ENCODE measurements at regions of chr17 and their contacts with region 1.

Region 1: GRCh38 chr17:49230636-49231562 is at the start of gene PHOSPHO1:
- DNase-seq: peak; percentile 93
- H3K4me3 Mint-ChIP-seq: peak within 1 kb of the TSS; percentile 70
- H3K27ac Mint-ChIP-seq: no peak within 1 kb of the TSS
- H3K4me1 Mint-ChIP-seq: peaks cover 16% of the 10 kb centered on the region
- H3K27me3 Mint-ChIP-seq: peaks cover 73% of the 10 kb centered on the region

Region 2: DNA sequence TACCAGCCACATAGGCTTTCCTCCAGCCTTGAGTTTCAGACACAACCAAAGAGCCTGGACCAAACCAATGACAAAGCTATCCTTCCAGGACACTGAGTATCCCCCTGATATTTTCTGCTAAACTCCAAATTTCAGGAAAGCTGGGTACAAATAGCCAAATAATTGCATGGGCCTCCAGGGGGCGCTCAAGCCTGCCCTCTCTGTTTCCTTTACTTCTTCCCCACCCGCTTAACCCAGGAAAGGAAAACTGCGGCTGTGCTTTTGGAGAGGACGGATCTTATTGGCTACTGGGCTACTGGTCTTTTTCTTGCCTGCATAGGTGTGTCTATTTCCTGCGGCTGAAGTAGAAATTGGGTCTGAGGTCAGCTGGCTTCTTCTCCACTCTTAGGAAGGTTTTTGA is 50.6 kb before region 1 on chr17:
- CTCF ChIA-PET with region 1: interaction called, 96 read pairs
- DNase-seq: peak; percentile 75
- H3K4me3 Mint-ChIP-seq: no peak overlapping the region
- H3K27ac Mint-ChIP-seq: no peak overlapping the region
- H3K4me1 Mint-ChIP-seq: peaks cover 9% of the 10 kb centered on the region
- H3K27me3 Mint-ChIP-seq: peaks cover 36% of the 10 kb centered on the region

Region 3: GRCh38 chr17:49191917-49192741 is 38.8 kb before region 1 on chr17:
- CTCF ChIA-PET with region 1: interaction called, 21 read pairs
- DNase-seq: peak; percentile 92
- H3K4me3 Mint-ChIP-seq: peak overlapping the region; percentile 84
- H3K27ac Mint-ChIP-seq: peak overlapping the region; percentile 100
- H3K4me1 Mint-ChIP-seq: peaks cover 54% of the 10 kb centered on the region
- H3K27me3 Mint-ChIP-seq: peaks cover 18% of the 10 kb centered on the region

Region 4: GRCh38 chr17:49197346-49197998 is 33.4 kb before region 1 on chr17:
- CTCF ChIA-PET with region 1: interaction called, 21 read pairs
- DNase-seq: no peak
- H3K4me3 Mint-ChIP-seq: no peak overlapping the region
- H3K27ac Mint-ChIP-seq: no peak overlapping the region
- H3K4me1 Mint-ChIP-seq: peaks cover 34% of the 10 kb centered on the region
- H3K27me3 Mint-ChIP-seq: peaks cover 12% of the 10 kb centered on the region

Region 5: DNA sequence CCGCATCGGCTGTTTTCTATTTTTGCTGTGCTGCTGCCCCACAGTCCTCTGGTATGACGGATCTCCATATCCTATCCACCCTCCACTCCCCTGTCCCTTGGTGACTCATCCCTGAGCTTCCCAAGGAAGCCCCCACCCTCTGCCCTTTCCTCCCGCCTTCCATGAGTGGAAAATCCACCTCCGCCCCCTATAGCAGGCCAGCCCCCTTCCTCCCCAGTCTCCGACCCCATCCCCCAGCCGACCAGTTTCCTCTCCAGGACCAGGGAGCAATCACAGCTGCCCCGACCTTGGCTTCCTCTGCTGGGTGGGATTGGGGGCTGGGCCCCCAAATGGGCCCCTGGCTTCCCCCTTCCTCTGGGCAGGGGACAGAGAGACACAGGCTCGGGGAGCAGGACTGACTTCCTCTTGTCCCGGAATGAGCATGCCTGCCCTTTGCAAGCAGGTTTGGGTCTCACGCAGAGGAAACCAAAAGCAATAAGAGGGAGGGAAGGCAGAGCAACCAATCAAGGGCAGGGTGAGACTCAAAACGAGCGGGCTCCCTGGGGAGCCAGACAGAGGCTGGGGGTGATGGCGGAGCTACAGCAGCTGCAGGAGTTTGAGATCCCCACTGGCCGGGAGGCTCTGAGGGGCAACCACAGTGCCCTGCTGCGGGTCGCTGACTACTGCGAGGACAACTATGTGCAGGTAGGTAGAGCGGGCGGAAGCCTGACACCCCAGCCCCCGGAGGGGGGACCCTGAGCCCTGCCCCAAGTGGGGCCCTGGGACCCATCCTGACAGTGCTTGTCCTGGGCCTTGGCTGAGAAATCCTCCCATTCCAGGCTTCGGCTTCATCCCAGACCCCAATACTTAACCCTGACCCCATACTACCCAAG is 20.5 kb before region 1 on chr17 and contains the starts of genes ABI3 and GNGT2:
- CTCF ChIA-PET with region 1: interaction called, 15 read pairs
- DNase-seq: peak; percentile 80
- H3K4me3 Mint-ChIP-seq: peak within 1 kb of the TSS; percentile 93
- H3K27ac Mint-ChIP-seq: peak within 1 kb of the TSS; percentile 86
- H3K4me1 Mint-ChIP-seq: peaks cover 67% of the 10 kb centered on the region
- H3K27me3 Mint-ChIP-seq: no peaks in the 10 kb centered on the region

Measured in activated naive CD4-positive, alpha-beta T cell treated with anti-CD3 and anti-CD28 coated beads, Interleukin-2, amount 10 ng/mL, durations not matched to agents 7 days and 5 days (primary cell).